ENCODE measurements at regions of chr18 and their contacts with region 1.

Region 1: GRCh38 chr18:35407871-35408481 is 30.8 kb upstream of the ZNF396 start:
- DNase-seq: peak; percentile 76
- H3K4me3 ChIP-seq: no peak overlapping the region
- CTCF ChIP-seq: peak; percentile 69

Region 2: GRCh38 chr18:35484034-35484433 is 76.1 kb after region 1 on chr18:
- in situ Hi-C with region 1: loop called (anchors 5 kb)
- DNase-seq: no peak
- H3K4me3 ChIP-seq: no peak overlapping the region
- CTCF ChIP-seq: no peak